HEK293 (cell line): ENCODE measurements at regions of chr3 and their contacts with region 1.

Region 1: DNA sequence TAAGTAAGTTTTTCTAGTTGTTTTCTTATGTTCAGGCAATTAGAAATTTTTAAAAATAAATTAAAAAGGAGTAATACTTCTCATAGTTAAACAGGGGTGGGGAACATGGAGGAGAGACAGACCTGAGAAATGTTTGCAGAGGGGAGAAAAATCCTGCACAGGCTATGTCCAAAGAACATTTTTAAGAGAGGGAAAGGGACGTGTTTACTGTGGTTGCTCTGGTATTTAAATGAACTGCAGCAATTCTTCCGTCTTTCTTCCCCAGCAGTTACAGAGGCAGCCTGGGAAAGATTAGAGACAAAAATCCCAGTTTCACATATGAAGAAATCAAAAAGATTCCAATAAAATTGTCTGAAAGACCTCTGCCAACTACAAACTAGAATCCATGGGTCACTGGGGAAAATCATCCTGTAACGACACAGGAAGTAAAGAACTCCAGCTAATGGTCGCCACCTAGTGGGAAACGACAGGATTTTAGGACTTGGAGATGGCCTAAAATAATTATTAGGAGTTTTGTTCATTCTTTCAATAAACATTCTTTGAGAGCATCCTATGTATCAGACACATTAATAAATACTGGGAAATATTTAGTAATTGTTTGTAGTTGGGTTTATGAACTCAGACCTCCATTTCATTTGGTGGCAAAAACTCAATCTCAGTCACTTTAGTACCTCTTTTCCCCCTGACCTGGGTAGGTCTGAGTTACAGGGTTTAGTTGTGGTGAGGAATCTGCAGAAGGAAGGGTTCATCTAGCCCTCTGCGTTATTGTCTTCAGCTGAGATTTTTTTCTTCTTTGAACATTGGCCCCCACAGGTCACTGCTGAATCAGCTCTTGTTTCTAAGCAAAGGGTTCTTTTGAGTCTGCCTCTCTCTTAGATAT is 69.9 kb upstream of the GOLIM4 start:
- H3K4me3 ChIP-seq: no peak overlapping the region
- H3K27ac ChIP-seq: no peak overlapping the region
- H3K4me1 ChIP-seq: no peaks in the 10 kb centered on the region
- CTCF ChIP-seq: no peak

Region 2: GRCh38 chr3:167983583-167983982 is 182.0 kb before region 1 on chr3:
- CTCF ChIA-PET with region 1: no interaction called
- POLR2A ChIA-PET with region 1: no interaction called
- H3K4me3 ChIP-seq: no peak overlapping the region
- H3K27ac ChIP-seq: no peak overlapping the region
- H3K4me1 ChIP-seq: no peaks in the 10 kb centered on the region
- CTCF ChIP-seq: no peak

Region 3: GRCh38 chr3:168040607-168041208 is 124.9 kb before region 1 on chr3:
- CTCF ChIA-PET with region 1: interaction called, 67 read pairs
- POLR2A ChIA-PET with region 1: no interaction called
- H3K4me3 ChIP-seq: no peak overlapping the region
- H3K27ac ChIP-seq: no peak overlapping the region
- H3K4me1 ChIP-seq: 0 out of 2 replicates have a peak, but pooled peaks cover 2% of the 10 kb centered on the region
- CTCF ChIP-seq: no peak

Region 4: GRCh38 chr3:168047190-168047795 is 118.3 kb before region 1 on chr3:
- CTCF ChIA-PET with region 1: interaction called, 67 read pairs
- POLR2A ChIA-PET with region 1: no interaction called
- H3K4me3 ChIP-seq: no peak overlapping the region
- H3K27ac ChIP-seq: no peak overlapping the region
- H3K4me1 ChIP-seq: 0 out of 2 replicates have a peak, but pooled peaks cover 5% of the 10 kb centered on the region
- CTCF ChIP-seq: peak; percentile 69; the same call in 1 of the 2 replicates

Region 5: GRCh38 chr3:168183774-168184173 is 18.1 kb after region 1 on chr3:
- CTCF ChIA-PET with region 1: interaction called, 11 read pairs
- POLR2A ChIA-PET with region 1: no interaction called
- H3K4me3 ChIP-seq: no peak overlapping the region
- H3K27ac ChIP-seq: no peak overlapping the region
- H3K4me1 ChIP-seq: no peaks in the 10 kb centered on the region
- CTCF ChIP-seq: no peak

Region 6: DNA sequence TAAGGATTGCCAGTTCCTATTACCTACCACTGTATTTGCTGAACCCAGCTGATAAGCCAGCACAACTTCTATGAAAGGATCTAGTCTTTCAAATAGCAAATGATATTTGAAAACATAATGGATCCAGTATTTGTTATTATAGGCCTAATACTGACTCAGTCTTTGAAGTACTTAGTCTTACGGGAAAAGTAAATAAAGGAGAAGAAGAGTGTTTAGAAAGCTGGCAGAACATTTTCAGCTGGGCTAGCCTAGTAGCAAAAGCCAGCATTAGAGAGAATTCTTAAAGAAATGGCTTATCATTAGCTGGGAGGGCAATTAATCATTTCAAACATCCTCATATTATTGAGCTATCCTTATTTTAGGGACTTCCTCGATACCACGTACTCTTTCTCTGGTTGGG is 31.5 kb after region 1 on chr3:
- CTCF ChIA-PET with region 1: no interaction called
- POLR2A ChIA-PET with region 1: no interaction called
- H3K4me3 ChIP-seq: no peak overlapping the region
- H3K27ac ChIP-seq: no peak overlapping the region
- H3K4me1 ChIP-seq: no peaks in the 10 kb centered on the region
- CTCF ChIP-seq: no peak